HCT116 (cell line): ENCODE measurements at regions of chr17 and their contacts with region 1.

Region 1: DNA sequence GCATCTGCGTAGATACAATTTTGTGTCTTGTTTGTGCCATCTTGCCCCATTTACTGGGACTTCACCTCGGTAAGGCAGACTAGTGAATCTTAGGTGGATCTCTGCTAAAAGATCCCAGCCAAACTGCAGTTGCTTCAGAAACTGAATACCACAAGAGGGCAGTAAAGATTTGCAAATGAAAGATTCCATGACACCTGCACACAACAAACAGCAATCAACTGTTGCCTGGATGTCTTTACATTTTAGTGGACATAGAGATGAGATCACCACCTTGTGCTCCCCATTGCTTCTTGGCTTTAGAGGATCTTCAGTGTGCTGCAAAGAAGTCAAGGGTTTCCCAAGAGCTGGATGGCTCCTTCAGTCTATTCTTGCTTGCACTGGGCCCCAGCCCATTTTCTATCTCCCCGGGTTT is 119.2 kb upstream of the CACNG5 start:
- DNase-seq: peak; percentile 64
- ATAC-seq: peak; percentile 77
- H3K4me3 ChIP-seq: no peak overlapping the region
- H3K27ac ChIP-seq: no peak overlapping the region
- H3K4me1 ChIP-seq: peaks cover 18 to 19% of the 10 kb centered on the region in 2 experiments
- H3K27me3 ChIP-seq: no peaks in the 10 kb centered on the region
- CTCF ChIP-seq: peak; percentile 77 to 97 (median 82)
- POLR2A ChIP-seq: no peak
- RAD21 ChIP-seq: peak; percentile 94

Region 2: GRCh38 chr17:66200685-66201092 is 515.1 kb before region 1 on chr17:
- CTCF ChIA-PET with region 1: interaction called, 4 read pairs
- POLR2A ChIA-PET with region 1: no interaction called
- RAD21 ChIA-PET with region 1: no interaction called
- intact Hi-C with region 1: loop called (anchors 2 kb)
- DNase-seq: peak; percentile 89
- ATAC-seq: peak; percentile 80
- H3K4me3 ChIP-seq: no peak overlapping the region
- H3K27ac ChIP-seq: no peak overlapping the region
- H3K4me1 ChIP-seq: peaks cover 0 to 7% of the 10 kb centered on the region in 2 experiments; a peak in 1 of 4 replicates
- H3K27me3 ChIP-seq: no peaks in the 10 kb centered on the region
- CTCF ChIP-seq: peak; percentile 88 to 95 (median 88)
- POLR2A ChIP-seq: no peak
- RAD21 ChIP-seq: peak; percentile 97

Region 3: GRCh38 chr17:66900126-66901010 is 184.6 kb after region 1 on chr17:
- CTCF ChIA-PET with region 1: interaction called, 12 read pairs
- POLR2A ChIA-PET with region 1: no interaction called
- RAD21 ChIA-PET with region 1: interaction called in 1 of 2 experiments, 3 read pairs
- intact Hi-C with region 1: loop called (anchors 1 kb)
- DNase-seq: peak; percentile 28
- ATAC-seq: peak; percentile 76
- H3K4me3 ChIP-seq: no peak overlapping the region
- H3K27ac ChIP-seq: no peak overlapping the region
- H3K4me1 ChIP-seq: peaks cover 0 to 3% of the 10 kb centered on the region in 2 experiments; a peak in 1 of 4 replicates
- H3K27me3 ChIP-seq: no peaks in the 10 kb centered on the region
- CTCF ChIP-seq: peak; percentile 38 to 82 (median 73); a peak in 5 of 6 replicates
- POLR2A ChIP-seq: no peak
- RAD21 ChIP-seq: peak; percentile 69

Region 4: DNA sequence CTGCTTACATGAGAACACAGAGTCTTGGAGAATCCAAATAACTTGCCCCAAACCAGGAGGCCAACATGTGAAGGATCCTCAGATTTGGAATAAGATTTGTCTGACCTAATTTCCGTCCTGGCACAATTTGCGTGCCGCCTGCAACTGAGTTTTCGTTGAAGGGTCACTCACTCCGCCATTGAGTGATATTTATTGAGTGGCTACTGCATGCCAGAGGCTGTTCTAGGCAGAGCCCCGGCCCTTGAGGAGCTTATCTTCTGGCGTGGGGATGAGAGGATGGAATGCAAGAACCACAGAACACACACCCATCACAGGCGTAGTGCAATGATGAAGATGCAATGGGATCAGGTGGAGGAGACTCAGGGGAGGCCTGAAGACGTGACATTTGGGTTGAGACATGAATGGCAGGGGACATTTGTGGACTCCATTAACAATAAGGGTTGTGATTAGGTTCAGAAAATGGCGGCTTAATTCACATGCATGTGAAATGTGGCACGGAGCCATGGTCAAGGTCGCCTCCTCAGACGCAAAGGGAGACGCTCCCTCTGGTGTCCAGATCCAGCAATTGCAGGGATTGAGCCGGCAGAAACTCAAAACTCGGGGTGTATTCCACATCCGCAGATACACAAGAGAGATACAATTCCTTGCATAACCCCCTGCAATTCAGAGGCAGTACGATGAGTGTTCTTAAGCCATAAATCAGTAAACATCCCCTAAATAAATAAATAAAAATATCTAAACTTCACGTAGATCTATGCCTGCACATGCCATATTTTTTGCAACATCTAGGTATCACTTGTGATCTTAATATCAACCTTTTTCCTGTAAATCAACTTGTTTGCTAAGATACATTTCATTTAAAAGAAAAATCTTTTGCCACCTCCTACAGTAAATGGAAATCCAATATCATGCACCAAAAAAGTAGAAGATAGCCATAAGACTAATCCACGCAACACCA is 190.8 kb after region 1 on chr17:
- CTCF ChIA-PET with region 1: interaction called, 5 read pairs
- POLR2A ChIA-PET with region 1: interaction called, 4 read pairs
- RAD21 ChIA-PET with region 1: no interaction called
- intact Hi-C with region 1: loop called (anchors 1 kb)
- DNase-seq: peak; percentile 81
- ATAC-seq: peak; percentile 73
- H3K4me3 ChIP-seq: no peak overlapping the region
- H3K27ac ChIP-seq: no peak overlapping the region
- H3K4me1 ChIP-seq: peaks cover 0 to 3% of the 10 kb centered on the region in 2 experiments; a peak in 1 of 4 replicates
- H3K27me3 ChIP-seq: no peaks in the 10 kb centered on the region
- CTCF ChIP-seq: peak; percentile 91 to 99 (median 98)
- POLR2A ChIP-seq: peak; percentile 40
- RAD21 ChIP-seq: peak; percentile 96

Region 5: GRCh38 chr17:66975604-66976384 is 260.0 kb after region 1 on chr17:
- CTCF ChIA-PET with region 1: interaction called, 8 read pairs
- POLR2A ChIA-PET with region 1: no interaction called
- RAD21 ChIA-PET with region 1: no interaction called
- intact Hi-C with region 1: loop called (anchors 2 kb)
- DNase-seq: peak; percentile 48
- ATAC-seq: peak; percentile 94
- H3K4me3 ChIP-seq: no peak overlapping the region
- H3K27ac ChIP-seq: no peak overlapping the region
- H3K4me1 ChIP-seq: peaks cover 10 to 16% of the 10 kb centered on the region in 2 experiments; a peak in 2 of 4 replicates
- H3K27me3 ChIP-seq: no peaks in the 10 kb centered on the region
- CTCF ChIP-seq: peak; percentile 71 to 92 (median 86)
- POLR2A ChIP-seq: no peak
- RAD21 ChIP-seq: peak; percentile 98

Region 6: DNA sequence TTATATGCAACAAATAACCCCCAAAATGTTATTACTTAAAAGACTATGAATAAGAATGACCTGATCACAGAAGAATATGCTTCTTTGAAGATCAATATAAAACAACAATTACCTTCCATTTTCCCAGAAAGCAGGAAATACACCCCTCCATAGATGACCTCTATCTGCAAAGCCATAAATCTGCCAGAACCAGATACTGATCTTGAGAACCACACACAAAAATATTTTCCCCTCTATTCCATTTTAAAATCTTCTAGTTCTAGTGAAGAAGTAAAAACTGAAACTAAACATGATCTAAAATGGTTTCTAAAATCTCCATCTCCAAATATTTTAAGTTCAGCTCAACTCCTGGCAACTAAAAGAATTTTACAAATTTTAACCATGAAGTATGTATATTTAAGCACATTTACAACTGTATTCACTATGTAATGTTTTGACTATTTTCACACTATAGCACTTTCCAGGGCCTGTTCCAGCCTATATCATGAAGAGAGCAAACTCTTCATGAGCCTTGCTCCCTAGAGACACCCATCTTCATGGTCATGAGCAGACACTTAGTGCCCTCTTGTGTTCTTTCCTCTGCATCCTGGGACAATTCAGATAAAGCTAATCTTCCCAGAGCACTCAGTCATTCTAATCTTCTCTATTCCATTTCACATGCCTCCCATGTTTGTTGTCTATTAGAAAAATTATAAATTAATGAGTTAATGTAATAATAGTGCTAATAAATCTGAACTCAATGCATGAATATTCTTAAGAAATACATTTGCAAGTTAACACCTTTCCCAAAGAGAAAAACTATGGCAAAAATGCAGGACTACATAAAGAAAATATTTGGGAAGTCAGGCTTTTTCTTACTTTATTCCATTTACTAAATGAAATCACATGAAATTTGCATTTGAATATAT is 442.2 kb after region 1 on chr17:
- CTCF ChIA-PET with region 1: interaction called, 4 read pairs
- POLR2A ChIA-PET with region 1: no interaction called
- RAD21 ChIA-PET with region 1: no interaction called
- intact Hi-C with region 1: loop called (anchors 2 kb)
- DNase-seq: peak; percentile 10
- ATAC-seq: peak; percentile 92
- H3K4me3 ChIP-seq: no peak overlapping the region
- H3K27ac ChIP-seq: no peak overlapping the region
- H3K4me1 ChIP-seq: no peaks in the 10 kb centered on the region
- H3K27me3 ChIP-seq: no peaks in the 10 kb centered on the region
- CTCF ChIP-seq: peak; percentile 40 to 49 (median 41); a peak in 5 of 6 replicates
- POLR2A ChIP-seq: no peak
- RAD21 ChIP-seq: peak; percentile 71

Region 7: DNA sequence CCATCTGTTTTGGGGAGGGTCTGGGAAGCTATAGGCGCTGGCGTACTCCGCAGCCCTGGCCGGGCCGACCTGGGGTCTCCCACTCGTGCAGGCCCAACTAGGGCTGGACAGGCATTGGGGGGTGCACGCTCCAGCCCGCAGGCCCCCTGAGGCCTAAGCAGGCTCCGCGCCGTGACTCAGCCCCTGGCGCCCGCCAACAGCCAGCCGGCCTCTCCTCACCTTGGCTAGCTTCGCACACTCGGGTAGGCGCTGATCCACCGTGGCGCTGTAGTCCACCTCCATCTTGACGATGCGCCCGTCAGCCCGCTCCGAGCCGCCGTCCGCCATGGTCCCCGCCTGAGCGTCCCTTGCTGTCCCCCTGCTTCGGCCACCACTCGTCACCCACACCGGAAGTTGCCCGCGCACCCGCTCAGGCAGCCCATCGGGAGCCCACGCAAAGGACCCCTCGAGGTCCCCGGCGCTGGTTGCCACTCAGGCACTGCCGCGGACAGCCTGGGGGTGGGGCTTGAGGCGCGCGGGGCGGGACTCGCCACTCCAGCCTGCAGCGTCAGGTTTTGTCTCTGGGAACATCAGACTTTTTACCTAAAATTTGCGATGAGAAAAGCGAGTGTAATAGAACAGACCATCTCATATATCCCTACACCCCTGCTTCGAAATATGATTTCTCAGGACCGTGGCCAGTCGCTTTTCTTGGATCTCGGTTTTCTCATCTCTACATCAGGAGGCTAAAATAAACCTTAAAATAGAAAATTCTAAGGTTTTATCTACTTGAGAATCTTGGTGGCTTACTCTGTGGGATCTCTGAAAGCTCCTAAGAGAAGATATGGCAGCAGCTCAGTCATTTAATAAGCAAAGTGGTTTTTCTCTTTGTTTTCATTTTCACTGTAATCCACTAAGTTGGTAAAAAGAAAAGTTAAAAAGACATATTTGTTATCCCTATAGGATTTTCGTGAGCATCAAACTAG is 650.7 kb after region 1 on chr17 and contains the start of gene PSMD12:
- CTCF ChIA-PET with region 1: no interaction called
- POLR2A ChIA-PET with region 1: no interaction called
- RAD21 ChIA-PET with region 1: no interaction called
- intact Hi-C with region 1: loop called (anchors 10 kb)
- DNase-seq: peak; percentile 89
- ATAC-seq: peak; percentile 97
- H3K4me3 ChIP-seq: peak within 1 kb of the TSS; percentile 93 to 97
- H3K27ac ChIP-seq: peak within 1 kb of the TSS; percentile 77
- H3K4me1 ChIP-seq: peaks cover 10 to 19% of the 10 kb centered on the region in 2 experiments; a peak in 3 of 4 replicates
- H3K27me3 ChIP-seq: no peaks in the 10 kb centered on the region
- CTCF ChIP-seq: no peak
- POLR2A ChIP-seq: peak; percentile 77
- RAD21 ChIP-seq: no peak
- total RNA-seq, gene PSMD12: 115 TPM